HCT116 (cell line): ENCODE measurements at regions of chr14 and their contacts with region 1.

Region 1: GRCh38 chr14:30500222-30500621 is 58.7 kb upstream of the G2E3 start:
- DNase-seq: no peak
- ATAC-seq: no peak
- H3K4me3 ChIP-seq: no peak overlapping the region
- H3K27ac ChIP-seq: no peak overlapping the region
- H3K4me1 ChIP-seq: no peaks in the 10 kb centered on the region
- H3K27me3 ChIP-seq: peaks cover 17% of the 10 kb centered on the region; the same call in 1 of the 2 replicates
- CTCF ChIP-seq: no peak
- POLR2A ChIP-seq: no peak
- RAD21 ChIP-seq: no peak

Region 2: GRCh38 chr14:30389134-30389876 is 110.9 kb before region 1 on chr14:
- CTCF ChIA-PET with region 1: no interaction called
- POLR2A ChIA-PET with region 1: no interaction called
- RAD21 ChIA-PET with region 1: no interaction called
- intact Hi-C with region 1: loop called (anchors 10 kb)
- DNase-seq: no peak
- ATAC-seq: no peak
- H3K4me3 ChIP-seq: no peak overlapping the region
- H3K27ac ChIP-seq: no peak overlapping the region
- H3K4me1 ChIP-seq: no peaks in the 10 kb centered on the region
- H3K27me3 ChIP-seq: peaks cover 62% of the 10 kb centered on the region
- CTCF ChIP-seq: no peak
- POLR2A ChIP-seq: no peak
- RAD21 ChIP-seq: no peak